ENCODE measurements at regions of chr5 and their contacts with region 1.

Region 1: DNA sequence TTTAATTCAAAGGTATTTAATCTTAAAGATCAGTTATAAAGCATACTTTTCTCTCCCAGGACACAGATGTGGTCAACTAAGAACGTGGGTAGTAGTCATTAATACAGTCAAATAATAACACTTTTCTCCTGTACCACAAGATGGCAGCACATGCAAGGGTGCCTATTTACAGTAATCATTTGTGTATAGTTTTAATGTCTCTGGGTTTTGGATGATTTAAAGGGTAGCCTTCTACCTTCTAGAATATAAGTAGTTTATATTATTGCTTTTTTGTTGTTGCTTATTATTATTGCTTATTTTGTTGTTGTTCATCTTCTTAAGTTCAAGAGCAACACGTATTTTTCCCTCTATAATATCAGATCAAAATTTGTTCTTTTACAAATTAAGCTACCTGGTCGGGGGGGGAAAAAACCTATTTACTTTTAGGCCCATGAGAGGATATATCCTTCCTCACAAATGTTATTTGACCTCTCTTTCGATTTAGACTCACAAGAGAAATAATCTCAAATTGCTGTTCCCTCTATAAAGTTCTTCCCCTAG is 59.6 kb upstream of the SLC27A6 start:
- DNase-seq: peak in 2 of 10 donors; percentile 14 to 35

Region 2: GRCh38 chr5:128644863-128645262 is 260.8 kb before region 1 on chr5:
- intact Hi-C with region 1: no loop called
- DNase-seq: no peak

Region 3: DNA sequence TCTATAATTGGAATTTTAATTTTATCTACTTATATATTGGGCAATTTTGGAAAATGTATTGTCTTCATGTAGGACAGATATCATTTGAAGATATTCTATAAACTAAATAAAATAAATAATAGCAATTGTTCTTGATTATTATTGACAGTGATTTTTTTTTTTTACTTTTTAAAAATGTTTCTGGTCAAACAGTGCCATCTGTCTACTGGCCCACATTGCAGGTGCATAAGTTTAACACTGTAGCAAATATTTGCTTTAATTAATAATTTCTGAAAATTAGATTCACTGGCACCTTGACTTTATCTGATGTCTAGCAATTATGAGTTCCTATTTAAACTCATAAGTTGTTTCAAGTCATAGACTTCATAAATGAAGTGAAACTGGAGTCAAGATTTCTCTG is 147.8 kb after region 1 on chr5:
- intact Hi-C with region 1: loop called (anchors 5 kb)
- DNase-seq: no peak

Region 4: DNA sequence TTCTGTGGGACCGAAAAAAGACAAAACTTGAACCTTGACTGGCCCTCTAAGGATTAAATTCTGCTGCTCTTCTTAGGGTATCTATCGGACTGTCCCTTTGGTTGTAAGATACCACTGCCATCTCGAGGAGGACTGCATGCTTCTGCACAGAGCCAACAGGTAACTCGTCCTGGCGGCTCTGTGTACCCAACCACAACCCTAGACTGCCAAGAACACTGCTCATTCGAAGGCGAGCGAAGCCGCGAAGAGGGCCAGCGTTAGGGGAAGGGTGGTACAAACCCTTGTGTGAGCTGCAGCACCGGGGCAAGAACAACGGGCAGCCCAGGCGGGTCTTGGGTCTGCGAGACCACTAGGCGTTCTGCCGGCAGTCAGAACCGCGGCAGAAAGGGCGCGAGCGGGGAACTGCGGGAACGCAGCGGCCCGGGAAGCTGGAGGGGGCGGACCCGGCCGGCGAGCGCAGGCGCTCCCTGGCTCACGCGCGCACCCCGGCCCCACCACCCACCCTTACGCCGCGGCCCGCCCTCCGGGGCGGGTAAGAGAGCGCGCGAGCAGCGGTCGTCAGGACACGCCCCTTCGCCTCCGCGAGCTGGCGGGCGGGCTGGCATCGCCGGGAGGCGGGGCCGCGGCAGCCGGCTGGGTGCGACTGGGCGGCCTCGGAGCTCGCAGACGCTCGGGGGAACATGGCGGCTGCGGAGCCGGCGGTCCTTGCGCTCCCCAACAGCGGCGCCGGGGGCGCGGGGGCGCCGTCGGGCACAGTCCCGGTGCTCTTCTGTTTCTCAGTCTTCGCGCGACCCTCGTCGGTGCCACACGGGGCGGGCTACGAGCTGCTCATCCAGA is 188.7 kb after region 1 on chr5 and contains the start of gene ISOC1:
- intact Hi-C with region 1: loop called (anchors 5 kb)
- DNase-seq: peak; percentile 78 to 99 (median 86)